PC-9 (cell line): ENCODE measurements at regions of chr15 and their contacts with region 1.

Region 1: GRCh38 chr15:54577476-54578250 is 599.4 kb downstream of the UNC13C start:
- DNase-seq: no peak
- H3K4me3 ChIP-seq: no peak overlapping the region
- H3K27ac ChIP-seq: no peak overlapping the region
- H3K4me1 ChIP-seq: no peaks in the 10 kb centered on the region
- H3K27me3 ChIP-seq: no peaks in the 10 kb centered on the region
- CTCF ChIP-seq: no peak

Region 2: DNA sequence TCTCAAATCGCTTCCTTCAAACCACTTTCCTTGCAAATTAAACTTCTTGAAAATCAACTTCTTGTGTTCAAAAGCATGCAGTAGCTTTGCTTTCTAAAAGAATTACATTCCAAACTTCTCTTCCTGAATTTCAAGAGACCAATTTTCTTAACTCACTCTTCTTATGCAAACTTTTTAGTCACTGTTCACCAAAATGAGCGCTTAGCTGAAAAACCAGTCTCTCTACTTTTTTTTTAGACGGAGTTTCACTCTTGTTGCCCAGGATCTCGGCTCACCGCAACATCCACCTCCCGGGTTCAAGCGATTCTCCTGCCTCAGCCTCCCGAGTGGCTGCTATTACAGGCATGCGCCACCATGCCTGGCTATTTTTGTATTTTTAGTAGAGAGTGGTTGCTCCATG is 678.3 kb before region 1 on chr15:
- CTCF ChIA-PET with region 1: no interaction called
- POLR2A ChIA-PET with region 1: interaction called, 30 read pairs
- intact Hi-C with region 1: no loop called
- DNase-seq: no peak
- H3K4me3 ChIP-seq: no peak overlapping the region
- H3K27ac ChIP-seq: no peak overlapping the region
- H3K4me1 ChIP-seq: no peaks in the 10 kb centered on the region
- H3K27me3 ChIP-seq: no peaks in the 10 kb centered on the region
- CTCF ChIP-seq: no peak